ENCODE measurements at regions of chr7 and their contacts with region 1.

Region 1: DNA sequence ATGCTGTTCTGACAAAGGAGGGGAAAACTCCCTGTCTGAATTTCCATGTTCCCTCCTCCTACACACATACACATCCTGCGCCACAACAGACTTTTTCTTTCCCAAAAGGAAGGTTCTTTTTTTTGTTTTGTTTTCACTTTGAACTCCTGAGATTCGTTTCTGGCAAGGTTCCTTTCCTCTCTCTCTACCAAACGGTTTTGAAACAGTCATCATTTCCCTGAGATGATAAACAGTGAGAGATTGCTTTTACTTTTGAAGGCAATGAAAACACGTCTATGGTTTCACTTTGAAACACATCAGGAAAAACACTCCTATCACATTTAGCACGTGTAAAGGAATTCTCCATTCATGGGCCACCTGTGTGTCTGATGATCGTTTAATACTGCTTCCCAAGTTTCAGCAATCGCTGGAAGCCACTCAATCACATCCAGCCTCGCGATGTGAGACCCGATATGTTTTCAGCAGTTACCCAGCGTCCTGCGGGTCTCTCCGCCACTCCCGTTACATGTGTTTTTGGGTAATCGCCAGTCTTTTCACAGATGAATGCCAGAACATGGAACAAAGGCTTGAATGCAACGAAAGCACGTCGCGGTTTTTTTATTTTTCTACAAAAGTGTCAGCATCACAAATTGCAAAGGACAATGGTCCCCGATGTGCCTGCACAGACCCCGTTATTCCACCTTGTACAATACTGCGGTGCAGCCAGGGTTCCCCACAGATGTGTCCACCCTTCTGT is 62.8 kb upstream of the CUX1 start:
- DNase-seq: no peak
- H3K4me3 Mint-ChIP-seq: peak overlapping the region; percentile 66
- H3K27ac Mint-ChIP-seq: peak overlapping the region; percentile 87
- H3K4me1 Mint-ChIP-seq: peaks cover 21% of the 10 kb centered on the region
- H3K27me3 Mint-ChIP-seq: no peaks in the 10 kb centered on the region

Region 2: GRCh38 chr7:101688183-101688831 is 66.3 kb before region 1 on chr7:
- CTCF ChIA-PET with region 1: no interaction called
- POLR2A ChIA-PET with region 1: no interaction called
- DNase-seq: peak; percentile 78
- H3K4me3 Mint-ChIP-seq: no peak overlapping the region
- H3K27ac Mint-ChIP-seq: no peak overlapping the region
- H3K4me1 Mint-ChIP-seq: peaks cover 9% of the 10 kb centered on the region
- H3K27me3 Mint-ChIP-seq: no peaks in the 10 kb centered on the region

Region 3: GRCh38 chr7:101717628-101718357 is 36.8 kb before region 1 on chr7:
- CTCF ChIA-PET with region 1: no interaction called
- POLR2A ChIA-PET with region 1: no interaction called
- DNase-seq: no peak
- H3K4me3 Mint-ChIP-seq: no peak overlapping the region
- H3K27ac Mint-ChIP-seq: no peak overlapping the region
- H3K4me1 Mint-ChIP-seq: peaks cover 7% of the 10 kb centered on the region
- H3K27me3 Mint-ChIP-seq: no peaks in the 10 kb centered on the region

Region 4: GRCh38 chr7:101743241-101743994 is 11.2 kb before region 1 on chr7:
- CTCF ChIA-PET with region 1: interaction called, 12 read pairs
- POLR2A ChIA-PET with region 1: no interaction called
- DNase-seq: peak; percentile 75
- H3K4me3 Mint-ChIP-seq: peak overlapping the region; percentile 78
- H3K27ac Mint-ChIP-seq: peak overlapping the region; percentile 62
- H3K4me1 Mint-ChIP-seq: peaks cover 56% of the 10 kb centered on the region
- H3K27me3 Mint-ChIP-seq: no peaks in the 10 kb centered on the region

Region 5: DNA sequence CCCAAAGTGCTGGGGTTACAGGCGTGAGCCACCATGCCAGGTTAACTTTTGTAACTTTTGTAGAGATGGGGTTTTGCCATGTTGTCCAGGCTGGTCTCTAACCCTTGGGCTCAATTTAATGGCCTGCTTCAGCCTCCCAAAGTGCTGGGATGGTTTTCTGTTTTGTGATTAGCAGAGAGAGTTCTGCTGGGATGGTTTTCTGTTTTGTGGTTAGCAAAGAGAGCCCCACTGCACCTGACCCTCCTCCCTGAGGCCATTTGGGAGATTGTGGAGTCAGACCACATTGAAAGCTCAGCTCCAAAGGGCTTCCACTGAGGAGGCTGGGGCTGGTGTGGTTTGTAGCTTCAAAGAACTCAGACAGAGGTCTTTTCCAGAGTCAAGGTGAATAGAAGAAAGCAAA is 33.3 kb after region 1 on chr7:
- CTCF ChIA-PET with region 1: no interaction called
- POLR2A ChIA-PET with region 1: no interaction called
- DNase-seq: no peak
- H3K4me3 Mint-ChIP-seq: no peak overlapping the region
- H3K27ac Mint-ChIP-seq: no peak overlapping the region
- H3K4me1 Mint-ChIP-seq: no peaks in the 10 kb centered on the region
- H3K27me3 Mint-ChIP-seq: peaks cover 8% of the 10 kb centered on the region

Region 6: GRCh38 chr7:101924171-101924570 is 169.6 kb after region 1 on chr7:
- CTCF ChIA-PET with region 1: no interaction called
- POLR2A ChIA-PET with region 1: no interaction called
- DNase-seq: no peak
- H3K4me3 Mint-ChIP-seq: no peak overlapping the region
- H3K27ac Mint-ChIP-seq: no peak overlapping the region
- H3K4me1 Mint-ChIP-seq: peaks cover 6% of the 10 kb centered on the region
- H3K27me3 Mint-ChIP-seq: no peaks in the 10 kb centered on the region

Measured in activated CD4-positive, alpha-beta T cell treated with anti-CD3 and anti-CD28 coated beads, Interleukin-2, amount 10 ng/mL, durations not matched to agents 7 days and 5 days (primary cell).